Spleen (tissue), 13 donors: ENCODE measurements at regions of chr6 and their contacts with region 1.

Region 1: GRCh38 chr6:7723041-7723447 is 2.9 kb upstream of the BMP6 start:
- DNase-seq: peak; percentile 86
- H3K4me3 ChIP-seq: no peak overlapping the region
- H3K27ac ChIP-seq: no peak overlapping the region
- H3K4me1 ChIP-seq: peaks cover 17 to 46% (median 34%) of the 10 kb centered on the region in 6 donors
- H3K27me3 ChIP-seq: peaks cover 4 to 65% (median 30%) of the 10 kb centered on the region in 7 donors
- CTCF ChIP-seq: peak; percentile 41 to 76 (median 68)
- POLR2A ChIP-seq: no peak

Region 2: GRCh38 chr6:7992002-7992815 is 269.2 kb after region 1 on chr6:
- intact Hi-C with region 1: loop called (anchors 5 kb)
- DNase-seq: no peak
- H3K4me3 ChIP-seq: no peak overlapping the region
- H3K27ac ChIP-seq: peak overlapping the region in 2 of 8 donors; percentile 2 to 34
- H3K4me1 ChIP-seq: peaks cover 0 to 8% (median 3%) of the 10 kb centered on the region in 6 donors
- H3K27me3 ChIP-seq: no peaks in the 10 kb centered on the region
- CTCF ChIP-seq: peak; percentile 8 to 70 (median 48)
- POLR2A ChIP-seq: no peak